Gastrocnemius medialis (tissue), 4 donors: ENCODE measurements at regions of chr9 and their contacts with region 1.

Region 1: GRCh38 chr9:120477521-120478001 is 102.4 kb downstream of the CDK5RAP2 start:
- DNase-seq: peak; percentile 46 to 81
- ATAC-seq: peak; percentile 77 to 80
- H3K4me3 ChIP-seq: no peak overlapping the region
- H3K27ac ChIP-seq: peak overlapping the region; percentile 76 to 89 (median 86)
- H3K4me1 ChIP-seq: peaks cover 37 to 42% of the 10 kb centered on the region in 2 donors
- H3K27me3 ChIP-seq: no peaks in the 10 kb centered on the region
- CTCF ChIP-seq: peak; percentile 80 to 96 (median 91)
- POLR2A ChIP-seq: no peak

Region 2: GRCh38 chr9:119556129-119556875 is 921.3 kb before region 1 on chr9:
- in situ Hi-C with region 1: loop called in 2 of 4 experiments (anchors 10 to 25 kb)
- intact Hi-C with region 1: loop called (anchors 1 kb)
- DNase-seq: peak; percentile 6 to 37
- ATAC-seq: peak; percentile 58 to 86
- H3K4me3 ChIP-seq: peak overlapping the region; percentile 7 to 48 (median 31)
- H3K27ac ChIP-seq: no peak overlapping the region
- H3K4me1 ChIP-seq: no peaks in the 10 kb centered on the region
- H3K27me3 ChIP-seq: no peaks in the 10 kb centered on the region
- CTCF ChIP-seq: peak; percentile 71 to 85 (median 79)
- POLR2A ChIP-seq: no peak

Region 3: DNA sequence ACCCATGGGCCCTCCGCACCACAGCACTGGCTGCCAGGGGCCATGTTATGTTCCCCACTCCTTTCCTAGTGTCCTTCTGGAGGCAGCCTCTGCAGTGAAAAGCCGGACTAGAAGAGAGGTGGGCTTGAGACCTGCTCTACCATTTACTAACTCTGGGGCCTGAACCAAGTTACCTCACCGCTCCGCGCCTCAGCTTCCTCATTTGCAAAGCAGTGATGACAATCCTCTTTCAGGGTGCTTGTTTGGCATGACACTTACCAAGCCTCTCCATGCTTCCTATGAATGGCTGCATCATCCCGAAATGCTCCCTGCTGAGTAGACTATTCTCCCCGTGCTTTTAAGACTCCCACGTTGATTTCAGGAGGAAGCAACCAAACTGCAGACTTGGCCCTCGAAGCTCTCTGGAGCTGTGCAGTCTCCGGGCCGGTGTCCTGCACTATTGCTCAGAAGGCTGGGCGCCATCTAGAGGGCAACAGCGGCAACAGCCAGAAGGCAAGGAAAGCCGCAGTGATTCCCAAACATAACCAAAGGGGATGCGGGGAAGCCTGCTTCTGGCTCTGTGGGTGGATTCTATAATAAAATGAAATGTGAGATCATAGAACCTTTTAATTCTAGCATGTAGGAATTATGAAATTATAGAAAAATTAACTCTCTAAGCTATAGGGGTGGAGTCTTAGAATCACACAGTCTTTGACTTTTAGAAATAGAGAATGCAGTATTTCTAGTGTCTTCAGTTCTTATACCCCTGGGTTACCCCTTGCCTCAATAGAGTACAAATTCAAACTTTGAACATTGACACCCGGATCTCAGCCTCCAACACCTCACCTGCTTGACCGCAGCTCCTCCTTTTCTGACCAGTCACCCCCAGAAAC is 508.5 kb before region 1 on chr9:
- in situ Hi-C with region 1: loop called in 1 of 4 experiments (anchors 25 kb)
- intact Hi-C with region 1: loop called (anchors 5 kb)
- DNase-seq: peak; percentile 35 to 55
- ATAC-seq: peak; percentile 64 to 81
- H3K4me3 ChIP-seq: no peak overlapping the region
- H3K27ac ChIP-seq: no peak overlapping the region
- H3K4me1 ChIP-seq: no peaks in the 10 kb centered on the region
- H3K27me3 ChIP-seq: no peaks in the 10 kb centered on the region
- CTCF ChIP-seq: peak; percentile 56 to 88 (median 76)
- POLR2A ChIP-seq: no peak

Region 4: GRCh38 chr9:120152295-120152694 is 325.3 kb before region 1 on chr9:
- in situ Hi-C with region 1: no loop called
- intact Hi-C with region 1: no loop called
- DNase-seq: no peak
- ATAC-seq: no peak
- H3K4me3 ChIP-seq: no peak overlapping the region
- H3K27ac ChIP-seq: no peak overlapping the region
- H3K4me1 ChIP-seq: no peaks in the 10 kb centered on the region
- H3K27me3 ChIP-seq: no peaks in the 10 kb centered on the region
- CTCF ChIP-seq: no peak
- POLR2A ChIP-seq: no peak

Region 5: DNA sequence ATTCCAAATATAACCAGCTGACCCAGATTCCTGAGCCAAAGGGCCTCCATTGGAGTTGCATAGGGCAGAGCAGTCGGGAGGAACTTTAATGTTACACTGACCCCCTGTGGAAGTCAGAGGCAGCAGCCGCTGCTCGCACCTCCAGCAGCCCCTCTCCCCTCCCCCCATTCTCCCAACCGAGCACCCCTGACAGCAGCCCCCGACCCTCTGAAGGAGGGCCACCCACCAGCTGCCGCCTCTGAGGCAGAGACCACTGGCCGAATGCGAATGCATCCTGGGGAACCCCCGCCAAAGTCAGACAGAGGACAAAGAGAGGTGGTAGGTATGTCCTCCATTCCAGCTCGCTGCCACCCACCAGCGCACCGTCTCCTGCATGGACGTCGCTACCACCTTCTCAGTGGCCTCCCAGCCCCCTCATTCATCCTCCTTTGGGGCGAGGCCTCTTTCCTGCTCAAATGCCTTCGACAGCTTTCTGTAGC is 128.6 kb before region 1 on chr9:
- in situ Hi-C with region 1: no loop called
- intact Hi-C with region 1: loop called (anchors 5 kb)
- DNase-seq: no peak
- ATAC-seq: peak; percentile 42 to 68
- H3K4me3 ChIP-seq: no peak overlapping the region
- H3K27ac ChIP-seq: no peak overlapping the region
- H3K4me1 ChIP-seq: no peaks in the 10 kb centered on the region
- H3K27me3 ChIP-seq: no peaks in the 10 kb centered on the region
- CTCF ChIP-seq: peak; percentile 37 to 69 (median 55)
- POLR2A ChIP-seq: no peak

Region 6: DNA sequence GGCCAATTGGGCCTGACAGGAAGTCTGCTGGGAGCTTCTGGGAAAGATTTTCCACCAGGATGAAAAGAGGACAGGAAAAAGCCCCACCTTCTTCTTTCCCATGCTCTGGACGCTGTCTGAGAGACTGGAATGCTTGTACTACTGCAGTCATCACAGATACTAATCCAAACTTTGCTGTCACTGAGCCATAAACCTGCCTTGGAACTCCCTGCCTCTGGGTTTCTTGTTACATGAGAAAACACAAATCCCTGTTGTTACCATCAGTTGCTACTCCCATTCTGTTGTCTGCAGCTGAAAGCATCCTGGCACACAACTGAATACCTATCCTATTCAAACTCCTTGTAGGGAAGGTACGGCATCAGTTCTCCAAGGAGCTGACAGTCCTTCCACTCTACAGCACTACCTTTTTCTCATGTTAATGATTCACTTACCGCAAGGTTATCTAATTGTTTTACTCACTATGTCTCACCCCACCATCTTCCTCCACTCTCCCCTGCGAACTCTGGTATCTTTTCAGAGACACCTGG is 65.1 kb before region 1 on chr9:
- in situ Hi-C with region 1: loop called in 1 of 4 experiments (anchors 10 kb)
- intact Hi-C with region 1: no loop called
- DNase-seq: no peak
- ATAC-seq: peak; percentile 80 to 81
- H3K4me3 ChIP-seq: no peak overlapping the region
- H3K27ac ChIP-seq: peak overlapping the region in 2 of 4 donors; percentile 3 to 28
- H3K4me1 ChIP-seq: peaks cover 15 to 20% of the 10 kb centered on the region in 2 donors
- H3K27me3 ChIP-seq: no peaks in the 10 kb centered on the region
- CTCF ChIP-seq: no peak
- POLR2A ChIP-seq: no peak